ENCODE measurements at regions of chr6 and their contacts with region 1.

Region 1: GRCh38 chr6:151060096-151060765 is 179.5 kb upstream of the AKAP12 start:
- DNase-seq: peak; percentile 97
- ATAC-seq: peak; percentile 86
- H3K4me3 ChIP-seq: no peak overlapping the region
- H3K27ac ChIP-seq: peak overlapping the region; percentile 100
- H3K4me1 ChIP-seq: peaks cover 50% of the 10 kb centered on the region
- H3K27me3 ChIP-seq: no peaks in the 10 kb centered on the region
- CTCF ChIP-seq: no peak

Region 2: GRCh38 chr6:151004415-151005024 is 55.7 kb before region 1 on chr6:
- CTCF ChIA-PET with region 1: no interaction called
- POLR2A ChIA-PET with region 1: no interaction called
- intact Hi-C with region 1: loop called (anchors 1 kb)
- DNase-seq: peak; percentile 91
- ATAC-seq: peak; percentile 92
- H3K4me3 ChIP-seq: peak overlapping the region; percentile 60
- H3K27ac ChIP-seq: peak overlapping the region; percentile 87
- H3K4me1 ChIP-seq: peaks cover 16% of the 10 kb centered on the region
- H3K27me3 ChIP-seq: no peaks in the 10 kb centered on the region
- CTCF ChIP-seq: no peak

Measured in PC-3 (cell line).